Breast epithelium (tissue), 4 donors: ENCODE measurements at regions of chrX and their contacts with region 1.

Region 1: DNA sequence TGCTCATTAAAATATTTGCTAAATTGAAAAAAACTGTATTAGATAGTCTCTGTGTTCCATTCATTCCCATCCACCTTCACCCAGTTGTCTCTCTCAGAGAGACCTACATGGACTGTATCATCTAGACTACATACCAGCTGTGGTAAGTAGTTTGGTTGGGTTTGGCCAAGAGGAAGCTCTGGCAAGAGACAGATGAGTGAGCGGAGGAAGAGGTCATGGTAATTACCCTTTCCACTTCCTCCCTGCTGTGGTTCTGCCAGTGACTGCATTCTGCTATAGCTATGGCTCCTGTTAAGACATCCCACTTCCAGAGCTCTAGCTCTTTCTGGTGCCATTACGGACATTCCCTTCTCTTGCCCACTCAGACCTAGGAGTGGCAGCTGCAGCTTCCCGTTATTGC is 239.0 kb upstream of the MID1 start:
- DNase-seq: no peak
- H3K4me3 ChIP-seq: no peak overlapping the region
- H3K27ac ChIP-seq: no peak overlapping the region
- H3K4me1 ChIP-seq: no peaks in the 10 kb centered on the region
- H3K27me3 ChIP-seq: peaks cover 0 to 8% of the 10 kb centered on the region in 2 donors
- CTCF ChIP-seq: no peak
- POLR2A ChIP-seq: no peak

Region 2: DNA sequence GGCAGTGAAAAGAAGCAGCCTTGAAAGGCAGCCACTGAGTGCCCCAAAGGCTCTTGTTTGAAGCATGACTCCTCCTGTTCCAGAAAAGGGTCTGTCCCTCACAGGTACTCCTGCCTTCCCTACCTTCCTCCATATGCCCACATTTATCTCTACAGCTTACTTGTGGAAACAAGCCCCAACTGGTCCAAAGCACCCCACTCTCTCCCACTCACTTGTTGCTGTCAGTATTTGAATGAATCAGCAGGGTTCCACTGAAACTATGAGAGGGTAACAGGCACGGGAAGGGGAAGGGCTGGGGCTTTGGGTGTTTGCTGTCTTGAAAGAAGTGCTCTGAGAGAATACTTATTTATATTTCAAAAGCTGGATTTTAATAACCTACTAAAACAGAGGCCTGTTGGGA is 1128.6 kb before region 1 on chrX:
- intact Hi-C with region 1: loop called (anchors 5 kb)
- DNase-seq: no peak
- H3K4me3 ChIP-seq: no peak overlapping the region
- H3K27ac ChIP-seq: no peak overlapping the region
- H3K4me1 ChIP-seq: no peaks in the 10 kb centered on the region
- H3K27me3 ChIP-seq: peaks cover 0 to 17% of the 10 kb centered on the region in 2 donors
- CTCF ChIP-seq: no peak
- POLR2A ChIP-seq: no peak

Region 3: GRCh38 chrX:10755439-10756334 is 103.7 kb before region 1 on chrX:
- intact Hi-C with region 1: no loop called
- DNase-seq: no peak
- H3K4me3 ChIP-seq: no peak overlapping the region
- H3K27ac ChIP-seq: peak overlapping the region in 1 of 2 donors; percentile 21
- H3K4me1 ChIP-seq: no peaks in the 10 kb centered on the region
- H3K27me3 ChIP-seq: peaks cover 0 to 11% of the 10 kb centered on the region in 2 donors
- CTCF ChIP-seq: no peak
- POLR2A ChIP-seq: no peak

Region 4: DNA sequence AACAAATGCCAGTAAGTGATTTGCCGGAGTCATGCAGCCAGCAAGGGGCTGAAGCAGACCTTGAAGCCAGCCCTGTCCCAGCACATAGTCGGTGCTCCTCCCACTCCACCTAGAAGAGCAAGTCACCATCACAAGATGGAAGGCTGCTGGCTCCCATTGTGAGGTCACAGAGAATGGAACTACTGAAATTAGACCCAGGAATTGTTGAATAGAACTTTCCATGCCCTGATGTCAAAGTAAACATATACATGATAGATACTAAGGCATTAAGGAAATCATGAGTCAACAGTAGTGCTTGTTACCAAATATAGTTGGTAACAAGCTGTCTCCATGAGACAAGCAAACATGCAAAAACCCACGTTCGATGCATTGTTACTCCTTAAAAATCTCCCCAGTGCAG is 61.9 kb before region 1 on chrX:
- intact Hi-C with region 1: no loop called
- DNase-seq: no peak
- H3K4me3 ChIP-seq: no peak overlapping the region
- H3K27ac ChIP-seq: no peak overlapping the region
- H3K4me1 ChIP-seq: no peaks in the 10 kb centered on the region
- H3K27me3 ChIP-seq: peaks cover 0 to 5% of the 10 kb centered on the region in 2 donors
- CTCF ChIP-seq: no peak
- POLR2A ChIP-seq: no peak

Region 5: GRCh38 chrX:11105080-11105479 is 245.7 kb after region 1 on chrX:
- intact Hi-C with region 1: loop called (anchors 5 kb)
- DNase-seq: no peak
- H3K4me3 ChIP-seq: no peak overlapping the region
- H3K27ac ChIP-seq: no peak overlapping the region
- H3K4me1 ChIP-seq: no peaks in the 10 kb centered on the region
- H3K27me3 ChIP-seq: peaks cover 0 to 14% of the 10 kb centered on the region in 2 donors
- CTCF ChIP-seq: no peak
- POLR2A ChIP-seq: no peak